ENCODE measurements at regions of chr3 and their contacts with region 1.

Region 1: DNA sequence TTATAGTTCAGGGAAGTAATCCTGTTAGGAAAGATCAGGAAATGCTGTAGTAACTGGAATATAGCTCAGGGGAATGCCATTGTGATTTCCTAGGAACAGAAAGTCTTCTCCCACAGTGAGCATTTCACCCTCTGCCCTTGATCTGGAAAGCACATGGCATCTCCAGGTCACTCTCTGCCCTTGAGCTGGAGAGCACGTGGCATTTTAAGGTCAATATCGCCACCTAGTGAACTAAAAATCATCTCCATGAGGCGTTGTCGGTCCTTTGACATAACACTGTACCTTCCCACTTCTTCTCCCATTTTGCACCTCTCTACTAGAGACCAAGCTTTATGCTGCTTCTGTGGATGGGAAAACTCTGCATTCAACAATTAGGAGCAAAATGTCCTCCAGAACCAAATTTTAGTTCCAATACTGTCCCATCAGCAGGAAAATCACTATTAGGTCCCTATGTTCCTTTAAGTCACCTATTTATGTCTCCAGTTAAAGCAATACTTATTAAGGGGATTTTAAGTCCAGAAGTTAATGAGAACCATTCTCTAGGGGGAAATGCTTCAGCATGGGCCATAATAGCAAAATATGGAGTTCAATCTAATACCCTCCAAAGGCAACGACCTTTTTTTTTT is 54.7 kb upstream of the GK5 start:
- DNase-seq: peak in 4 of 5 donors; percentile 32 to 54 (median 35)
- ATAC-seq: peak; percentile 84 to 92 (median 88)
- H3K4me3 ChIP-seq: no peak overlapping the region
- H3K27ac ChIP-seq: no peak overlapping the region
- H3K4me1 ChIP-seq: peaks cover 0 to 33% (median 0%) of the 10 kb centered on the region in 12 donors
- H3K27me3 ChIP-seq: no peaks in the 10 kb centered on the region
- CTCF ChIP-seq: peak; percentile 45 to 74 (median 66)
- POLR2A ChIP-seq: no peak

Region 2: GRCh38 chr3:141575879-141576743 is 704.0 kb before region 1 on chr3:
- intact Hi-C with region 1: loop called in 1 of 10 experiments (anchors 5 kb)
- DNase-seq: no peak
- ATAC-seq: peak in 2 of 4 donors; percentile 65 to 71
- H3K4me3 ChIP-seq: no peak overlapping the region
- H3K27ac ChIP-seq: peak overlapping the region in 1 of 12 donors; percentile 63
- H3K4me1 ChIP-seq: peaks cover 0 to 9% (median 0%) of the 10 kb centered on the region in 12 donors
- H3K27me3 ChIP-seq: no peaks in the 10 kb centered on the region
- CTCF ChIP-seq: peak; percentile 31 to 71 (median 56)
- POLR2A ChIP-seq: no peak

Region 3: DNA sequence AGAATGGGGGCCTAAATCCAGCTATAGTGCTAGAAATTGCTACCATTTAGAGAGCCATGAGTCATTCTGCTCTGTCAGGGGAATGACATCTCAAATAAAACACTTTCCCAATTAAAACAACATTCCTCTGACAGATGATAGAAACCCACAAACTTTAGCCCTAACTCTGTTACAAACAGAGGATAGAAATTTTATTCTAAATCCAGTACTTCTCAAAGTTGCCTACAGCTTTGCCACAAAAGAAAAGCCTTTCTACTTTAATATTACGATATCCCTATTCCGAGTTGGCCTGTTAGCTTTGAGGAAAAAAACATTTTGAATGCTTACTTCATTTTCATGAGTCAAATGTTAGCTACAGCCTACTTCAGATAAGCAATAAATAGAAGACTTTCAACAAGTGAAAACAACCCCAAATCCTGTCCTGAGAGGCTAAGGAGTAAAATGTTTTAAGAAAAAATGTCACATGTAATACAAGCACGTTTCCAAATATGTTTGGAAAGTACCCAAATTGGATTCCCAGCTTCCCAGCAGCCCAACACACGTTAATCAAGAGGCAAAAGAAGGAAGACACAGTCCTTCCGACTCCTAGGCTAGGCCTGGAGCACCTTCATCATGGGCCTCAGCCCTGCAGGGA is 320.0 kb before region 1 on chr3:
- intact Hi-C with region 1: loop called (anchors 1 to 5 kb)
- DNase-seq: no peak
- ATAC-seq: peak in 2 of 4 donors; percentile 22 to 42
- H3K4me3 ChIP-seq: no peak overlapping the region
- H3K27ac ChIP-seq: peak overlapping the region; percentile 1 to 65 (median 32)
- H3K4me1 ChIP-seq: peaks cover 0 to 16% (median 0%) of the 10 kb centered on the region in 12 donors
- H3K27me3 ChIP-seq: no peaks in the 10 kb centered on the region
- CTCF ChIP-seq: no peak
- POLR2A ChIP-seq: no peak

Region 4: GRCh38 chr3:142106548-142106947 is 173.5 kb before region 1 on chr3:
- intact Hi-C with region 1: no loop called
- DNase-seq: no peak
- ATAC-seq: no peak
- H3K4me3 ChIP-seq: no peak overlapping the region
- H3K27ac ChIP-seq: no peak overlapping the region
- H3K4me1 ChIP-seq: no peaks in the 10 kb centered on the region
- H3K27me3 ChIP-seq: no peaks in the 10 kb centered on the region
- CTCF ChIP-seq: no peak
- POLR2A ChIP-seq: no peak

Region 5: GRCh38 chr3:142124243-142124642 is 155.8 kb before region 1 on chr3:
- intact Hi-C with region 1: loop called (anchors 2 to 10 kb)
- DNase-seq: no peak
- ATAC-seq: no peak
- H3K4me3 ChIP-seq: no peak overlapping the region
- H3K27ac ChIP-seq: no peak overlapping the region
- H3K4me1 ChIP-seq: no peaks in the 10 kb centered on the region
- H3K27me3 ChIP-seq: no peaks in the 10 kb centered on the region
- CTCF ChIP-seq: no peak
- POLR2A ChIP-seq: no peak

Region 6: DNA sequence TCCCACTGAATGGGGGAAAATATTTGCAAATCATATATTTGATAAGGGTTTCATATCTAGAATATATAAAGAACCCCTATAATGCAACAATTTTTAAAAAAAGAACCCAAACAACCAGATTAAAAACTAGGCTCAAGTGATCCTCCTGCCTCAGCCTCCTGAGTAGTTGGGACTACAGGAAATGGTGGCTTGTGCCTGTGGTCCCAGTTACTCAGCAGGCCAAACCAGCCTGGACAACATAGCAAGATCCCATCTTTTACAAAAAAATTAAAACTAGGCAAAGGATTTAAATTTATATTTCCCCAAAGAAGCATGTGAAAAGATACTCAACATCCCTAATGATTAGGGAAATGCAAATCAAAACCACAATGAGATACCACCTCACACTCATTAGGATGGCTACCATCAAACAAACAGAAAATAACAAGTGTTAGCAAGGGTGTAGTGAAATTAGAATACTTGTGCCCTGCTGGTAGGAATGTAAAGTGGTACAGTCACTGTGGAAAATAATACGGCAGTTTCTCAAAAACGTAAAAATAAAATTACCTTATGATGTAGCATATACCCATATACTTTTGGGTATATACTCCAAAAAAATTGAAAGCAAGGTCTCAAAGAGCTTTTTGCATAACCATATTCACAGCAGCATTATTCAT is 150.4 kb before region 1 on chr3:
- intact Hi-C with region 1: loop called (anchors 2 to 10 kb)
- DNase-seq: no peak
- ATAC-seq: no peak
- H3K4me3 ChIP-seq: no peak overlapping the region
- H3K27ac ChIP-seq: no peak overlapping the region
- H3K4me1 ChIP-seq: no peaks in the 10 kb centered on the region
- H3K27me3 ChIP-seq: no peaks in the 10 kb centered on the region
- CTCF ChIP-seq: no peak
- POLR2A ChIP-seq: no peak

Region 7: GRCh38 chr3:142180761-142181362 is 99.2 kb before region 1 on chr3:
- intact Hi-C with region 1: loop called in 7 of 10 experiments (anchors 1 to 10 kb)
- DNase-seq: peak in 1 of 5 donors; percentile 23
- ATAC-seq: peak in 1 of 4 donors; percentile 54
- H3K4me3 ChIP-seq: no peak overlapping the region
- H3K27ac ChIP-seq: no peak overlapping the region
- H3K4me1 ChIP-seq: no peaks in the 10 kb centered on the region
- H3K27me3 ChIP-seq: no peaks in the 10 kb centered on the region
- CTCF ChIP-seq: peak; percentile 18 to 57 (median 46)
- POLR2A ChIP-seq: no peak

Region 8: DNA sequence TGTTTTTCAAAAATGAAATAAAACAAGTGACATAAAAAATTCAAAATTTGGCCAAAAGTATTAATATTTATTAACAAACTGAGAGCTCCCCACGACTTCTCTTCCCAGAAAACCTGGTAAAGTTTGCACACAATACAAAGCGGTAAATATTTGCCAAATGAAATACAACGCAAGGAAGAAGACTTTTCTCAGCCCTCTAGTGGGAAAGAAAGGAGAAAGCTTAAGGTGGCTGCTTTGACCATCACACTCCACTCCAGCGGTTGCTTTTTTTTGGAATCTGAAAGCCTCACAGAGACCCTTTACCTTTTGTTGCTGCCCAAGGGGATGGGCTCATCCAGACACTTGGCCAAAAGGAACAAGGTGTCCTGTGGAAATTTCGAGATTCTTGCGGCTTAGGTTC is 53.6 kb before region 1 on chr3:
- intact Hi-C with region 1: no loop called
- DNase-seq: no peak
- ATAC-seq: no peak
- H3K4me3 ChIP-seq: no peak overlapping the region
- H3K27ac ChIP-seq: no peak overlapping the region
- H3K4me1 ChIP-seq: peaks cover 0 to 25% (median 8%) of the 10 kb centered on the region in 12 donors
- H3K27me3 ChIP-seq: no peaks in the 10 kb centered on the region
- CTCF ChIP-seq: no peak
- POLR2A ChIP-seq: no peak